ENCODE measurements at regions of chr7 and their contacts with region 1.

Region 1: GRCh38 chr7:156842317-156842716 is 50.7 kb downstream of the LMBR1 start:
- DNase-seq: no peak
- H3K4me3 ChIP-seq: no peak overlapping the region
- H3K27ac ChIP-seq: no peak overlapping the region
- H3K4me1 ChIP-seq: no peaks in the 10 kb centered on the region
- CTCF ChIP-seq: no peak

Region 2: GRCh38 chr7:156589808-156590207 is 252.5 kb before region 1 on chr7:
- CTCF ChIA-PET with region 1: no interaction called
- POLR2A ChIA-PET with region 1: no interaction called
- intact Hi-C with region 1: no loop called
- DNase-seq: no peak
- H3K4me3 ChIP-seq: no peak overlapping the region
- H3K27ac ChIP-seq: no peak overlapping the region
- H3K4me1 ChIP-seq: no peaks in the 10 kb centered on the region
- CTCF ChIP-seq: no peak

Region 3: GRCh38 chr7:156795415-156795814 is 46.9 kb before region 1 on chr7:
- CTCF ChIA-PET with region 1: no interaction called
- POLR2A ChIA-PET with region 1: no interaction called
- intact Hi-C with region 1: no loop called
- DNase-seq: no peak
- H3K4me3 ChIP-seq: no peak overlapping the region
- H3K27ac ChIP-seq: no peak overlapping the region
- H3K4me1 ChIP-seq: no peaks in the 10 kb centered on the region
- CTCF ChIP-seq: no peak

Region 4: DNA sequence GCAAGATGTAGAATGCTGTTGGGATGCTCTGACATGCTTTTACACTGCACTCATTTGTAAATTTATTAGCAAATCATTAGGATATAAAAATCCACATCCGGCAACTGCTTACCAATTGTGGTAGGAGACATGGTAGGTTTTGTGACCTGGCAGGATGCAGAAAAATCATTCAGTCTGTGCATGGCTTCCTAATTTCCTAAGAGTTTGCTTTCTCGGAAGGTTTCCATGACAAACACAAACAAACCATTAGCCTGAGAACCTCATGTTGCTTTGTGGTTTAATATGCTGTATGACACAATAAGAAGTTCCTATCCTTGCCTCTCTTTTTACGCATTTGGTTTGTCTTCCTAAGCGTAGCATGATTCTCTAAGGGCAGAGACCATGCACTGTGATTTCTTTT is 65.3 kb after region 1 on chr7:
- CTCF ChIA-PET with region 1: no interaction called
- POLR2A ChIA-PET with region 1: no interaction called
- intact Hi-C with region 1: no loop called
- DNase-seq: no peak
- H3K4me3 ChIP-seq: no peak overlapping the region
- H3K27ac ChIP-seq: no peak overlapping the region
- H3K4me1 ChIP-seq: no peaks in the 10 kb centered on the region
- CTCF ChIP-seq: no peak

Region 5: DNA sequence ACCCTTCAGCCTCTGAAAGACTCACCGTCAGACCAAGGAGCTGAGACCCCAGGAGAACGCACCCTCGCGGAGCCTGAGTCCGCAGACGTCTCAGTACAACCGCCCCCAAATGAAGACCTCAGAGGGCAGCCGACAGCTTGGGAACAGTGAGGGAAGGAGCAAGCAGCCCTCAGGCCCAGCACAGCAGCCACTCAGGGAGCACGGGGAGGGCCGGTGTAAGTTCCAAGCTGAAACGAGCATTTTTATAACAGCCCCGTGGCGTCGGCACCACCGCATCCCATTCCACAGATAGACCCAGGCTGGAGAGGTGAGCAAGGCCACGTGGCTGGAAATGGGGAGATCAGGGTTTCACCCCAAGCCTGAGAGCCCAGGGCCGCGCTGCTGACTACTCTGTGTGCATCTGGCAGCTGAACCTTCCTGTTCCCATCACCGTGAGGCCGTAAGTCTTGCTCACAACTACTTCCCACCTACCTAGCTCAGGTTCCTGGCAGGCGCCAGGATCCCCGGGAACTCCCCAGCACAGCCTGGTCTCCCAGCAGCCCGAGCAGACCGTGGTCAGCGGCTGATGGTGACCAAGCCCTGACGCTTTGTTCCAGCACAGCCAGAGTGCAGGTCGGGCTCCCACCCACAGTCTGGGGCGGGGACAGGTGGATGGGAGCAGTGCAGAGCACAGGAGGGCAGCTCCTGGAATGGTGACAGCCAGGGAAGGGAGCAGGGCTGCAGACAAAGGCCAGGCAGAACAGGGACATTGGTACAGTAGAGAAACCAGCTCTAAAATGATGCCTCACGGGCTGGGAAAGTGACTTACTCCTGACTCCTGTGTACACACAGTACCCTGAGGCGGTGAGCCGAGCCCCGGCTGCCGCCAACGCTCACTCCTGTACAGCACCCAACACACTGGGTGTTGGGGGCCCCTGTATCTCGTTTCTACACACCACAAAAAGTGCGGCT is 101.0 kb after region 1 on chr7:
- CTCF ChIA-PET with region 1: no interaction called
- POLR2A ChIA-PET with region 1: interaction called, 10 read pairs
- intact Hi-C with region 1: no loop called
- DNase-seq: no peak
- H3K4me3 ChIP-seq: no peak overlapping the region
- H3K27ac ChIP-seq: no peak overlapping the region
- H3K4me1 ChIP-seq: peaks cover 1% of the 10 kb centered on the region
- CTCF ChIP-seq: no peak

Region 6: GRCh38 chr7:157336383-157337315 is 494.3 kb after region 1 on chr7 and contains the start of gene DNAJB6:
- CTCF ChIA-PET with region 1: no interaction called
- POLR2A ChIA-PET with region 1: no interaction called
- intact Hi-C with region 1: no loop called
- DNase-seq: peak; percentile 95
- H3K4me3 ChIP-seq: peak within 1 kb of the TSS; percentile 76
- H3K27ac ChIP-seq: peak within 1 kb of the TSS; percentile 84
- H3K4me1 ChIP-seq: peaks cover 83% of the 10 kb centered on the region
- CTCF ChIP-seq: no peak
- total RNA-seq, gene DNAJB6: 56.4 and 69.3 TPM in 2 replicates